Mammary epithelial cell (primary cell): ENCODE measurements at regions of chr17 and their contacts with region 1.

Region 1: GRCh38 chr17:46266656-46267544 is 28.0 kb upstream of the LRRC37A start:
- DNase-seq: peak; percentile 85
- H3K4me3 ChIP-seq: peak overlapping the region; percentile 53 to 68 (median 66)
- H3K27ac ChIP-seq: peak overlapping the region; percentile 64
- H3K4me1 ChIP-seq: peaks cover 24% of the 10 kb centered on the region
- H3K27me3 ChIP-seq: no peaks in the 10 kb centered on the region
- CTCF ChIP-seq: no peak

Region 2: DNA sequence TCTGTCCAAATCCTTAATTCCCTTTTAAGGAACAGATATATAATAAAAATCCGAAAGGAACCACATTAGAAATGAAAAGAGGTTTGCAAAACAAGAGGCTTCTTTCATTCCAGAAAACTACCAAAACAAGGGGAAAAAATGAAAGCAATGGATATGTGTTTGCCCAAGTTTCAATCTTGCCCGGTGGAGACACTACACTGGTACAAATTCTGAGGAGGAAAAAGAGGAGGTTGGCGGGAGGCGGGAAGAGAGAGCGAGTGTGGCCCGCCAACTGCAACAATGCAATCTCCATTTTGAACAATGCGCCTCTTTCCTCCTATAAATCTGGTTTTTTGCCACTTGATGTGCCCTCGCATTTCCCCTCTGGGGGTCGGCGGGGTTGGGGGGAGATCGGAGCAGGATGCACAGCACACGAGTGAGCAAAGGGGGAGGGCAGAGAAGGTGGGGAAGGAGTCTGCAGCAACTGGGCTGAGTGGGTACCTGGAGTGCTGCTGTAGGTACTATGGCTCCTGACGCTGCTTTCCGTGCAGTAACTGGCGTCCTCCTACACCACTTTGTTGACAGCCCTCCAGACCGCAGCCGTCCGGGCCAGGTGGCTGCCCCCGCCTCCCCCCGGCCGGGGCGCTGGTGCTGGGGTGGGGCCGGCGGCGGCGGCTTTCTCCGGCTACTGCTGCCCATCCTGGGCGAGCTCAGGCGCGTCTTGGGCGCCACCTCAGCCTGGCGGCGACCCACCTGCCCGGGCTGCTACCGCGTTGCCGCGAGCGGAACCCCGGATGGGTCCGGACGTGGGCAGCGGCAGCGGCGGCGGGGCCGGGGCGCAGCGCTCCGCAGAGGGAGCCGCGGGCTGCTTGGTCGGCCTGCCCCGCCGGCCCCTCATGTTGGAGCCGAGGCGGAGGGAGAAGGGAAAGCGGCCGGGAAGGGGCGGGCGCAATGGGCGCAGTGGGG is 682.5 kb before region 1 on chr17:
- CTCF ChIA-PET with region 1: interaction called, 14 read pairs
- dilution Hi-C with region 1: no loop called
- in situ Hi-C with region 1: loop called in 1 of 2 experiments (anchors 25 kb)
- intact Hi-C with region 1: no loop called
- DNase-seq: peak; percentile 85
- H3K4me3 ChIP-seq: peak overlapping the region; percentile 64 to 67 (median 65)
- H3K27ac ChIP-seq: peak overlapping the region; percentile 87
- H3K4me1 ChIP-seq: peaks cover 16% of the 10 kb centered on the region
- H3K27me3 ChIP-seq: no peaks in the 10 kb centered on the region
- CTCF ChIP-seq: no peak